GM12878 (cell line): ENCODE measurements at regions of chr5 and their contacts with region 1.

Region 1: DNA sequence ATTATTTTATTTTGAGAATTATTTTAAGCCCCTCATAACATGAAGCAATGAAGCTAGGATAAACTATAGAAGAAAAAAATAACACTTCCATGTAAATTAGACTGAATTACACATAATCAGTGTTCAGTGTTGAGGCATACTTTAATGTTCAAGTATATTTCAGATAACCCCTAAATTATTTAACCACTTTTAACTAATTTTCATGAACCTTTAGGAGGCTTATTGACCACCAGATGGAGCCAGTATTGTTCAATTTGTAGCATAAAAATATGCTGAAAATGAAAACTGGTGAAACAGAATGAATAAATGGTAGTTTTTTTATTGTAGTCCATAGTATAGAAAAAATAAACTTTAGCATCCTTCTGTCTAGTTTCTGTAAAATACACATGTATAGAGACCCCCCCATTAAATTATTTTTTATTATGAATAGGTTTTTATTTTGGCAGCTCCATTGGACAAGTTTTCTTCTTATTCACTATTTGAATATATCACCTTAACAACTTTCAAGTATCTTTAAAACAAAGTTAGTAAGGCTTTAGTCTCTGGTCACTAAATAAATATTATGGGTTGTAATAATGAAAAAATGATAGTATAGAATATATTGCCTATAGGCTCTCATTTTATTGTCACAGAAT is 190.1 kb downstream of the CWC27 start:
- DNase-seq: no peak
- ATAC-seq: peak; percentile 61
- H3K4me3 ChIP-seq: no peak overlapping the region
- H3K27ac ChIP-seq: no peak overlapping the region
- H3K4me1 ChIP-seq: no peaks in the 10 kb centered on the region
- H3K27me3 ChIP-seq: no peaks in the 10 kb centered on the region
- CTCF ChIP-seq: peak in 2 of 3 experiments; percentile 36 to 49; a peak in 4 of 6 replicates
- EP300 ChIP-seq: no peak
- POLR2A ChIP-seq: no peak
- RAD21 ChIP-seq: peak; percentile 86

Region 2: DNA sequence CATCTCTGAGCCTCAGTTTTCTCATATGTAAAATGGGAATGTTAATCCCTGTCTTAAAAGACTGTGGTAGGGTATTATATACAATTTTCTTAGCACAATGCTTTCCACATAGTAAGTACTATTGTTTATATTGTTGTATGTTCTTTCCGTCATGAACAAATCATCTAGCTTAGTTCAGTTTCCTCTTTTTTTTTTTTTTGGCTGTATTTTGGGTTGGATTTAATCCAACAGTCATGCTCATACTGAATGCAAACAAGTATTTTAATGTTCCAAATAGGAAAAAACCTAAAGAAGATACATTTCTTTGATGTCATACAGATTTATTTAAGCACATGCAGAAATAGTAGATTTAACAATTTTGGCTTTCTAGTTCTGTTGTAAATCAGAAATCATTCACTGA is 698.1 kb before region 1 on chr5:
- CTCF ChIA-PET with region 1: no interaction called
- POLR2A ChIA-PET with region 1: no interaction called
- RAD21 ChIA-PET with region 1: no interaction called
- SMC1A ChIA-PET with region 1: no interaction called
- in situ Hi-C with region 1: no loop called
- intact Hi-C with region 1: no loop called
- DNase-seq: no peak
- ATAC-seq: no peak
- H3K4me3 ChIP-seq: no peak overlapping the region
- H3K27ac ChIP-seq: no peak overlapping the region
- H3K4me1 ChIP-seq: no peaks in the 10 kb centered on the region
- H3K27me3 ChIP-seq: no peaks in the 10 kb centered on the region
- CTCF ChIP-seq: no peak
- EP300 ChIP-seq: no peak
- POLR2A ChIP-seq: no peak
- RAD21 ChIP-seq: no peak

Region 3: DNA sequence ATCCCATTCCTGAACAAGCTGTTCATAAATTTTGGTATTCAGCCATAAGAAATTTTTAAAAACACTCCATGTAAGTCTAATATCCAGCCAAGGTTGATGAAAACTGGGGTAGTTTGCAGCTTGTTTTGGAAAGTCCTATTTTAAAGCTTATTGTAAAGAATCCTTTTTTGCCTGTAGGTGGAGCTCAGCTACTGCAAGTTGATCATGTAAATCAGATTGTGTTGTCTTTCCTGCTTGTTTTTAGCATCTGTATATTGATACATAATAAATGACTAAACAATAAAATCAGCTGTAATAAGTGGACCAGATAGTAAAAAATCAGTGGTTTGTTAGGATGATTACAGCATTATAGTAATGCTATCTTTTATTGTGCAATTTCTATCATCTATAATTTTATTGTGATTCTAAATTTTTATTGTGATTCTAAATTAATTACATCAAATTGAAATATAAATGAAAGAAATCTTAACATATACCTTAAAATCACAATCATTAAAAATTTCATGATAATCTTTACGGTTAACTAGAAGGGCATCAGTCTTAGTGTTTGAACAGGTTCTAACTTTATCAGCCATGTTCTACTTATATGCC is 147.7 kb before region 1 on chr5:
- CTCF ChIA-PET with region 1: interaction called, 10 read pairs
- POLR2A ChIA-PET with region 1: no interaction called
- RAD21 ChIA-PET with region 1: interaction called, 12 read pairs
- SMC1A ChIA-PET with region 1: interaction called, 3 read pairs
- in situ Hi-C with region 1: no loop called
- intact Hi-C with region 1: loop called (anchors 5 kb)
- DNase-seq: peak; percentile 5
- ATAC-seq: peak; percentile 69
- H3K4me3 ChIP-seq: no peak overlapping the region
- H3K27ac ChIP-seq: no peak overlapping the region
- H3K4me1 ChIP-seq: peaks cover 12% of the 10 kb centered on the region
- H3K27me3 ChIP-seq: no peaks in the 10 kb centered on the region
- CTCF ChIP-seq: peak; percentile 54 to 72 (median 56); a peak in 5 of 6 replicates
- EP300 ChIP-seq: no peak
- POLR2A ChIP-seq: no peak
- RAD21 ChIP-seq: peak; percentile 92

Region 4: GRCh38 chr5:64900618-64901017 is 58.3 kb before region 1 on chr5:
- CTCF ChIA-PET with region 1: no interaction called
- POLR2A ChIA-PET with region 1: no interaction called
- RAD21 ChIA-PET with region 1: no interaction called
- SMC1A ChIA-PET with region 1: no interaction called
- in situ Hi-C with region 1: no loop called
- intact Hi-C with region 1: no loop called
- DNase-seq: no peak
- ATAC-seq: peak; percentile 32; the same call in 2 of the 3 replicates
- H3K4me3 ChIP-seq: no peak overlapping the region
- H3K27ac ChIP-seq: no peak overlapping the region
- H3K4me1 ChIP-seq: no peaks in the 10 kb centered on the region
- H3K27me3 ChIP-seq: no peaks in the 10 kb centered on the region
- CTCF ChIP-seq: no peak
- EP300 ChIP-seq: no peak
- POLR2A ChIP-seq: no peak
- RAD21 ChIP-seq: no peak

Region 5: GRCh38 chr5:65190328-65191053 is 231.6 kb after region 1 on chr5:
- CTCF ChIA-PET with region 1: interaction called, 3 read pairs
- POLR2A ChIA-PET with region 1: no interaction called
- RAD21 ChIA-PET with region 1: no interaction called
- SMC1A ChIA-PET with region 1: no interaction called
- in situ Hi-C with region 1: no loop called
- intact Hi-C with region 1: loop called (anchors 5 kb)
- DNase-seq: peak; percentile 17
- ATAC-seq: peak; percentile 92
- H3K4me3 ChIP-seq: no peak overlapping the region
- H3K27ac ChIP-seq: no peak overlapping the region
- H3K4me1 ChIP-seq: peaks cover 7% of the 10 kb centered on the region
- H3K27me3 ChIP-seq: no peaks in the 10 kb centered on the region
- CTCF ChIP-seq: no peak
- EP300 ChIP-seq: peak in 1 of 2 experiments; percentile 47; a peak in 1 of 4 replicates
- POLR2A ChIP-seq: no peak
- RAD21 ChIP-seq: no peak

Region 6: GRCh38 chr5:65271906-65272305 is 313.0 kb after region 1 on chr5:
- CTCF ChIA-PET with region 1: no interaction called
- POLR2A ChIA-PET with region 1: no interaction called
- RAD21 ChIA-PET with region 1: no interaction called
- SMC1A ChIA-PET with region 1: no interaction called
- in situ Hi-C with region 1: no loop called
- intact Hi-C with region 1: loop called (anchors 10 kb)
- DNase-seq: no peak
- ATAC-seq: no peak
- H3K4me3 ChIP-seq: no peak overlapping the region
- H3K27ac ChIP-seq: no peak overlapping the region
- H3K4me1 ChIP-seq: no peaks in the 10 kb centered on the region
- H3K27me3 ChIP-seq: no peaks in the 10 kb centered on the region
- CTCF ChIP-seq: no peak
- EP300 ChIP-seq: no peak
- POLR2A ChIP-seq: no peak
- RAD21 ChIP-seq: no peak